Gastrocnemius medialis (tissue), 4 donors: ENCODE measurements at regions of chr12 and their contacts with region 1.

Region 1: DNA sequence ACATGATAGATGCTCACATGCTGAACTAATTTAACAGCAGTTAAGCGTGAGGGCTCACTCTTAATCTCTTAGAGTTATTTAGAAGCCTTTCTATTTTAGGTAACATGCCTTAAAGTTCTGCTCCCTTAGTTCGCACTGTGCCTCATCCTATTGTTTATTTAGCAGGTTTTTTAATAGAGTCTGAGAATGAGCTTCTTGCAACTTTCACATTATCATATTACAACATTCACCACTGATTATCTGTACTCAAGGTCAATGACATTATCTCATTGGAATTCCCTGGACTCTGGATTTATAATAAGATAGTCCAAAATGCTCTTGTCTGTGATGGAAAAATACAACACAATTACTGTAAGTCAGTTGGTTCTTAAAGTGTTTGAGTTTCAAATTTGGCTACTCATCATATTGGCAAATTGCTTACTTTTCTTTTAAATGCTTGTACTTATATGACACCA is 183.6 kb upstream of the SLC38A2 start:
- DNase-seq: peak in 1 of 2 donors; percentile 40
- ATAC-seq: peak; percentile 43 to 89
- H3K4me3 ChIP-seq: peak overlapping the region in 1 of 4 donors; percentile 0
- H3K27ac ChIP-seq: peak overlapping the region; percentile 68 to 90 (median 80)
- H3K4me1 ChIP-seq: peaks cover 72 to 82% of the 10 kb centered on the region in 2 donors
- H3K27me3 ChIP-seq: no peaks in the 10 kb centered on the region
- CTCF ChIP-seq: no peak
- POLR2A ChIP-seq: peak in 1 of 2 donors; percentile 34

Region 2: DNA sequence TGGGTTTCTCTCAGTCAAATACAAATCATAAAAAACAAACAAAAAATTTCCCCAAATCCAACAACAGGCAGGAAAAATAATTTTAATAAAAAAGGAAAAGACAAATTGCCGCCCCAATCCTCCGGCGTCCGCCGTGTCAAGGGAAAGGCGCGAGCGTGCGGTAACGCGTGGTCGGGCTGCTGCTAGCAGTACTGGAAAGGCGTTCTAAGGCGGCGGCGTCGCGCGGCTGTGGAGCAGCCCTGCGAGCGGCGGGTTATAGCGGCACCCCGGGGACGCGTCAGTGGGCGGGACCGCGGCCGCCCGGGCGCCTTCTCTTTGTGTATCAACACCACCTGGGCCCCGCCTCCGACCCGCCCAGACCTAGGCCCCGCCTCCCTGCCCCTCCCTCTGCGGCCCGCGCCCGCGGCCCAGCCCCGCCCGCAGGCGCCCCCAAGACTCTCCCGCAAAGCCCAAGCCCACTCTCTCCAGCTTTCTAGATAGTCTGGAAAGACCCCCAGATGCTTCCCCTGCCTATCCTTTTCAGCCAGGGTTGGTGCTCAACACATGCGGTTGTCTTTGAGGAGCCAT is 183.5 kb before region 1 on chr12 and contains the start of gene SLC38A2:
- in situ Hi-C with region 1: loop called in 1 of 4 experiments (anchors 25 kb)
- intact Hi-C with region 1: loop called (anchors 2 kb)
- DNase-seq: peak; percentile 97 to 98
- ATAC-seq: peak; percentile 69 to 71
- H3K4me3 ChIP-seq: peak within 1 kb of the TSS; percentile 68 to 87 (median 80)
- H3K27ac ChIP-seq: peak within 1 kb of the TSS; percentile 93 to 97 (median 95)
- H3K4me1 ChIP-seq: peaks cover 38 to 46% of the 10 kb centered on the region in 2 donors
- H3K27me3 ChIP-seq: no peaks in the 10 kb centered on the region
- CTCF ChIP-seq: no peak
- POLR2A ChIP-seq: peak; percentile 100
- total RNA-seq, gene SLC38A2: 260 to 853 (median 400) TPM

Region 3: GRCh38 chr12:46450279-46450748 is 105.8 kb before region 1 on chr12:
- in situ Hi-C with region 1: no loop called
- intact Hi-C with region 1: loop called (anchors 5 kb)
- DNase-seq: peak; percentile 50 to 85
- ATAC-seq: peak; percentile 51 to 85
- H3K4me3 ChIP-seq: no peak overlapping the region
- H3K27ac ChIP-seq: peak overlapping the region; percentile 62 to 75 (median 71)
- H3K4me1 ChIP-seq: peaks cover 48 to 54% of the 10 kb centered on the region in 2 donors
- H3K27me3 ChIP-seq: no peaks in the 10 kb centered on the region
- CTCF ChIP-seq: no peak
- POLR2A ChIP-seq: no peak

Region 4: DNA sequence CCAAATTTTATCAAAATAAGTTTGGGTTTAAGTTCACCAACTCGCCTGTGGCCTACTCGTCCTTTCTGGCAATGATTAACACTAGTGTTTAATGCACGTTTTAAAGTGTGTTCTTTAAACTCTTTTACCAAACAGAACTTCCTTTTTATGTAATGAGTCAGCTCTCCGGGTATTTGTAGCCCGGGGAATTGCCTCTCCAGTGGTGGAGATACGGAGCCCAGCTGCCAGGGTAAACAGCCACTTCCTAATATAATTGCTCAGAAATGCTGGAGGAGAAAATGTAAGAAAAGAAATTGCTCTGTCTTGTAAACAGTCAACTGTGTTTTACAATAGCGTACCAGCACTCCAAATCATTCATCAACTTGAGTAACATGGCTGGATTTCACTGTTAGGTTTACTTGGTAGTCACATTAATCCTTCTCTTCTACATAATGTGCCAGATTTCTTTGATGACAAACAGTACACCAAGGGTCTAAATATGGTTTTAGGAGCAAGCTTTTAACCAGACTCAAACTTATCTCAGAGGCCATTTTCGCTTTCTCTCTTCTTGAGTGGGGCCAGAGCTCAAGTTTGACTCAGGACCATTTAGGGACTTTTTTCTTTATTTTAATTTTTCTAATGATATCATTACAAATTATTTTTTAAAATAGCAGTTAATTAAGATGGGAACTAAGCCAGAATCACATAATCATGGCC is 82.3 kb before region 1 on chr12:
- in situ Hi-C with region 1: no loop called
- intact Hi-C with region 1: loop called (anchors 5 kb)
- DNase-seq: peak; percentile 4 to 49
- ATAC-seq: peak; percentile 66 to 69
- H3K4me3 ChIP-seq: peak overlapping the region in 3 of 4 donors; percentile 4 to 23 (median 10)
- H3K27ac ChIP-seq: peak overlapping the region; percentile 75 to 80 (median 78)
- H3K4me1 ChIP-seq: peaks cover 37 to 41% of the 10 kb centered on the region in 2 donors
- H3K27me3 ChIP-seq: no peaks in the 10 kb centered on the region
- CTCF ChIP-seq: no peak
- POLR2A ChIP-seq: no peak

Region 5: DNA sequence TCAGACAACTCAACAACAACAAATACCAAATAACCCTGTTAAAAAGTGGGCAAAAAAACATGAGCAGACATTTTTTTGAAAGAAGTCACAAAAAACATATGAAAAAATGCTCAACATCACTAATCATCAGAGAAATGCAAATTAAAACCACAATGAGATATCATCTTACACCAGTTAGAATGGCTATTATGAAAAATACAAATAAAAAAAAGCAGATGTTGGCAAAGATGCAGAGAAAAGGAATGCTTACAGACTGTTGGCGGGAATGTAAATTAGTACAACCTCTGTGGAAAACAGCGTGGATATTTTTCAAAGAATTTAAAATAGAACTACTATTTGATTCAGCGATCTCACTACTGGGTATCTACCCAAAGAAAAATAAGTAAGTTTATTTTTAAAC is 155.6 kb after region 1 on chr12:
- in situ Hi-C with region 1: no loop called
- intact Hi-C with region 1: no loop called
- DNase-seq: no peak
- ATAC-seq: no peak
- H3K4me3 ChIP-seq: no peak overlapping the region
- H3K27ac ChIP-seq: no peak overlapping the region
- H3K4me1 ChIP-seq: no peaks in the 10 kb centered on the region
- H3K27me3 ChIP-seq: no peaks in the 10 kb centered on the region
- CTCF ChIP-seq: no peak
- POLR2A ChIP-seq: no peak